ENCODE measurements at regions of chr12 and their contacts with region 1.

Region 1: DNA sequence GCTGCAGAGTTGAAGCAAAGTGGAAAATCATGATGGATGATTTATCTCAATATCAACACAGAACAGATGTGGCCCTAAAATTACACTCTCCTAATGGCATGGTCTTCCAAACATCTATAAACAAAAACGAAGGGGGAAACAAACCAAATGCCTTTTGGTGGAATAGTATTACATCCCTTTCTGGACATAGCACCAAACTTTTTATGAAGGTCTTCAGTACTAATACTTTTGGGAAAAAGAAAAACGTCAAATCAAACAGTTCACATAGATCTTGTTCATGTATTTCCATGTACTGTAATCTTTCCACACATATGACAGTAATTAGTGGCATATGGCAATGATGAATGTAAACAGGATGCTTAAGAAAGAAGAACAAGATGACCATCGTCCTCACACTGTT is 22.9 kb upstream of the ANAPC7 start:
- DNase-seq: no peak
- ATAC-seq: no peak
- H3K4me3 ChIP-seq: no peak overlapping the region
- H3K27ac ChIP-seq: no peak overlapping the region
- H3K4me1 ChIP-seq: no peaks in the 10 kb centered on the region
- H3K27me3 ChIP-seq: no peaks in the 10 kb centered on the region
- CTCF ChIP-seq: no peak

Region 2: GRCh38 chr12:110093631-110094311 is 332.6 kb before region 1 on chr12:
- intact Hi-C with region 1: loop called in 2 of 3 experiments (anchors 10 kb)
- DNase-seq: no peak
- ATAC-seq: no peak
- H3K4me3 ChIP-seq: no peak overlapping the region
- H3K27ac ChIP-seq: no peak overlapping the region
- H3K4me1 ChIP-seq: no peaks in the 10 kb centered on the region
- H3K27me3 ChIP-seq: no peaks in the 10 kb centered on the region
- CTCF ChIP-seq: no peak

Region 3: GRCh38 chr12:110100315-110100970 is 326.0 kb before region 1 on chr12:
- intact Hi-C with region 1: loop called (anchors 10 kb)
- DNase-seq: peak in 5 of 6 donors; percentile 16 to 64 (median 36)
- ATAC-seq: peak; percentile 73 to 94 (median 88)
- H3K4me3 ChIP-seq: no peak overlapping the region
- H3K27ac ChIP-seq: no peak overlapping the region
- H3K4me1 ChIP-seq: peaks cover 0 to 3% (median 0%) of the 10 kb centered on the region in 3 donors
- H3K27me3 ChIP-seq: no peaks in the 10 kb centered on the region
- CTCF ChIP-seq: peak; percentile 64 to 82 (median 70)

Region 4: DNA sequence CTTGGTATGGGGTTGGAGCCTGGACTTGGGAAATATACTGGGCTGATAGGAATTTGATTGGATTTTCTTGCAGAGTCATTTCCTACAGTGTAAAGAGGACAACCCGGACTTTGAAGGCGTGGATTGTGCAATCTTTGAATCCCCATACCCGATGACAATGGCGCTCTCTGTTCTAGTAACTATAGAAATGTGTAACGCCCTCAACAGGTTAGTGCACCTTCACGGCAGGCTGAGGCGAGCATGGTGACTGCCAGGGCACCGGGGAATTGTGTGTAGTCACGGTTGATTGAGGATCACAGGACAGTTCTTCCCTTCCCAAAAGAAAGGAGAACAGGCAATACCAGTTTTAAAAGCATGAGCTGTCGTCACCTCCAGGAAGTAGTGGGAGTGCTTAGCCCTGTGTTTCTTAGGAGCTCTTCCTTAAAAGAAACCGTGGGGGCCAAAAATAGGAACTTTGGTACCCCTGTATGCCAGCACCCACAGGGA is 81.2 kb before region 1 on chr12:
- intact Hi-C with region 1: no loop called
- DNase-seq: no peak
- ATAC-seq: peak in 3 of 4 donors; percentile 56 to 75 (median 72)
- H3K4me3 ChIP-seq: no peak overlapping the region
- H3K27ac ChIP-seq: peak overlapping the region in 1 of 4 donors; percentile 48
- H3K4me1 ChIP-seq: no peaks in the 10 kb centered on the region
- H3K27me3 ChIP-seq: no peaks in the 10 kb centered on the region
- CTCF ChIP-seq: no peak

Region 5: DNA sequence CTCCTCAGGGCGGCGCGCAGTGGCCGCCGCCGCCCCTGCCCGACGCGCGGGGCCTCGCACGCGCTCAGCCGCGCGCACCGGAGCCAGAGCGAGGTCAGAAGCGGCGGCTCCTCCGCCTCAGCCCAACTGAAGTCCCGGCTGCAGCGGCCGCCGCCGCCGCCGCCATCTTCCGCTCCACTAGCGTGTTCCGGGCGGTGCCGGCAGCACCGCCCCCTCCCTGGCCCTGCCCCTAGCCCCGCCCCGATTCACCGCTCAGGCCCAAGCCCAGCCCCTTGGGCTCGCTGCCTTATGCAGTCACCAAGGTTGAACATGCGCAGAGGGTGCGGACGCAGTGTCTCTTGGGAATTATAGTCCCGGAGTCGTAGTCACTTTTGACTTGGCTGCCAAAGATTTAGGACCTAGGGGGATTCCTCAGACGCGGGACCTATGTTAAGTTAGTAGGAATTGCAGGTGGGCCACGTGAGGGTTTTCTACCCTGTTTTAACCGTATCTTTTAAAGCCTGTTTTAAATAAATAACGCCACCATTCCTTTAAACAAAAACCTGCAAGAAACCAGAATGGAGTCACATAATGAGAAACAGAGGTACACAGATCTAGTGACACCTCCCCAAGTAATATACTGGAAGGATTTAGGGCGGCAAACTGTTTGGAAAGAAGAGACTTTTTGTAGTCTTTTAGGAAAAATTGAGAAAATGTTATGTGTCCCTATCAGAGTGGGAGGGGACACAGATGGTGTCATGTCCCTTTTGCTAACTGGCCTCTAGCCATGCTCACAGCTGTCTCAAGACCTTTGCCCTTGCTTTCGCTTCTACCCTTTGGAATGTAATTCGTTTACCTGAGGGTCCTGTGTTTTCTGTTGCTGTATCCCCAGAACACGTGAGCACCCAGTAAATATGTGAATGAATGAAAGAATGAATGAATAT is 157.0 kb after region 1 on chr12 and contains the start of gene PPTC7:
- intact Hi-C with region 1: no loop called
- DNase-seq: peak; percentile 96 to 99 (median 97)
- ATAC-seq: peak; percentile 90 to 95 (median 94)
- H3K4me3 ChIP-seq: peak within 1 kb of the TSS; percentile 57 to 90 (median 78)
- H3K27ac ChIP-seq: peak within 1 kb of the TSS; percentile 66 to 88 (median 78)
- H3K4me1 ChIP-seq: peaks cover 29 to 50% (median 36%) of the 10 kb centered on the region in 3 donors
- H3K27me3 ChIP-seq: no peaks in the 10 kb centered on the region
- CTCF ChIP-seq: no peak
- total RNA-seq, gene PPTC7: 4.6 to 9.0 (median 6.2) TPM

Measured in pancreas (tissue), 10 donors.